WTC11 (cell line): ENCODE measurements at regions of chr15 and their contacts with region 1.

Region 1: GRCh38 chr15:63945007-63945788 is 101.1 kb downstream of the DAPK2 start:
- DNase-seq: peak; percentile 82
- ATAC-seq: peak; percentile 97
- H3K4me3 Mint-ChIP-seq: no peak overlapping the region
- H3K27ac Mint-ChIP-seq: no peak overlapping the region
- H3K4me1 Mint-ChIP-seq: peaks cover 2% of the 10 kb centered on the region
- H3K27me3 Mint-ChIP-seq: no peaks in the 10 kb centered on the region
- CTCF ChIP-seq: peak; percentile 87

Region 2: GRCh38 chr15:63701365-63701764 is 243.8 kb before region 1 on chr15:
- CTCF ChIA-PET with region 1: no interaction called
- POLR2A ChIA-PET with region 1: no interaction called
- DNase-seq: no peak
- ATAC-seq: no peak
- H3K4me3 Mint-ChIP-seq: no peak overlapping the region
- H3K27ac Mint-ChIP-seq: no peak overlapping the region
- H3K4me1 Mint-ChIP-seq: peaks cover 3% of the 10 kb centered on the region; the same call in 1 of the 2 replicates
- H3K27me3 Mint-ChIP-seq: no peaks in the 10 kb centered on the region
- CTCF ChIP-seq: no peak

Region 3: GRCh38 chr15:63752075-63752684 is 193.0 kb before region 1 on chr15:
- CTCF ChIA-PET with region 1: interaction called, 24 read pairs
- POLR2A ChIA-PET with region 1: no interaction called
- DNase-seq: no peak
- ATAC-seq: peak; percentile 55; the same call in 1 of the 2 replicates
- H3K4me3 Mint-ChIP-seq: no peak overlapping the region
- H3K27ac Mint-ChIP-seq: no peak overlapping the region
- H3K4me1 Mint-ChIP-seq: no peaks in the 10 kb centered on the region
- H3K27me3 Mint-ChIP-seq: no peaks in the 10 kb centered on the region
- CTCF ChIP-seq: peak; percentile 36

Region 4: DNA sequence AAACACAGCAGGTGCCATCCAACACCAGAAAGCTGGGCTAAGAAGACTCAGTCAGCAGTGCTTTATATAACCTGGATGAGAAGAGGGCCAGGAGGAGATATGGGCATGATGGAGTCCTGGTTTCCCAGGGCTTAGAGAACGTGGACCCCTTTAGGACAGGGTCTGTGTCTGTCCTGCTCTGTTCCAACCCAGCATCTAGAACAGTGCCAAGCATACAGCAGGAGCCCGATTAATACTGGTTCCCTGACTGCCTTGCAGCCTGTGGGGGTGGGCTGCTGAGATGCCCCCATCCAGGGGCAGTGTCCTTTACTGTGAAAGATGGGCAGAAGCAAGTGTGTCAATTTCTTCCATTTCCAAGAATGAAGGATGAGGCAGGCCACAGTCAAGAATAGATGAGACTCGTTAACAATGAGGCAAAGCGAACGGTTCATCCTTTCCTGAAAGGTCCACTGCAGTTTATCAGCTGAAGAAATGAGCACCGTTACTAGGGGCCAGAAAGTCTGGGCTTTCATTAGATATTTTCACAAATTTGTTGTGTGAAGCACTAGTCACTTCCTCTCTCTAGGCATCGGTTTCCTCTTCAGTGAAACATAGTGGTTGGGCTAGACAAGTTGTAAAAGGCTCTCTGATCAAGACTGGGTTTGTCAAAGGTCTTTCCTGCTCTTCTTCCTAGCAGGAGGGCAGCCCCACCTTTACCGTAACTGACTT is 39.5 kb before region 1 on chr15:
- CTCF ChIA-PET with region 1: interaction called, 28 read pairs
- POLR2A ChIA-PET with region 1: no interaction called
- DNase-seq: no peak
- ATAC-seq: no peak
- H3K4me3 Mint-ChIP-seq: no peak overlapping the region
- H3K27ac Mint-ChIP-seq: no peak overlapping the region
- H3K4me1 Mint-ChIP-seq: peaks cover 20% of the 10 kb centered on the region
- H3K27me3 Mint-ChIP-seq: no peaks in the 10 kb centered on the region
- CTCF ChIP-seq: no peak

Region 5: DNA sequence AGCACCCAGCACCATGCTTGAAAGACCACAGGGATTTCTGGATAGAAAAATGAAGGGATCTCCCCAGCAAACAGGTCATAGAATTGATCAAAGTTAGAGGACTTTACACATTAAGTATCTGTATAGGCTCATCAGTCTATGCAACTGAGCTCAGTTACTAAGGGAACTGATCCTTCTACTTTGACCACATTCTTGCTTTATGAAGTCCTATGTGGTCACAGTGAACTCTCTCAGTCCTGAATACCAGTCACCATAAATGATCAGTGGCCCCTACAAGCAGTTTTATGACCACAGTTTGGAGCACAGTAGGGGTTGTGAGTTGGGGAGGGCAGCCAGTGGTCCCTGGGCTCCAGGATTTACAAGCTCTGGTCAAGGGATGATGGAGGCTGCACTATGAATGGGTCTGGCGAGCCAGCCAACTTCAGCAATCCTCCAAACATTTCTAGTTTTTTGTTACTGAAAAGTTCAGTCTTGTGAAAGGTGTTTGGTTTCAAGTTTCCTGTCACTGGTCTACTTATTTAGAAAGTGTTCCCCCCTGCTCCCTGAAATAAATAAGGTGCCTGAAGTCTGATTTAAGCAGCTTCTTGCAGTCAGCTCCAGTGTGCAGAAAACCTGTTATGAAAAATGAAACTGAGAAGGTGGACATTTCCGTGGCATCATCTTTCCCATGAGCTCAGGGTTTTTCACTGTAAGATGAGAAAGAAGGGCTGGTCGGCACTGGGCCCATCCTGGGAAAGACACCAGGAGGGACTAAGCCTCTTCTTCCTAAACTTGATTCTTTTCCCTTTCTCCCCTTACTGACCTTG is 25.6 kb after region 1 on chr15:
- CTCF ChIA-PET with region 1: interaction called, 52 read pairs
- POLR2A ChIA-PET with region 1: no interaction called
- DNase-seq: no peak
- ATAC-seq: no peak
- H3K4me3 Mint-ChIP-seq: no peak overlapping the region
- H3K27ac Mint-ChIP-seq: no peak overlapping the region
- H3K4me1 Mint-ChIP-seq: peaks cover 55% of the 10 kb centered on the region
- H3K27me3 Mint-ChIP-seq: peaks cover 23% of the 10 kb centered on the region
- CTCF ChIP-seq: no peak

Region 6: DNA sequence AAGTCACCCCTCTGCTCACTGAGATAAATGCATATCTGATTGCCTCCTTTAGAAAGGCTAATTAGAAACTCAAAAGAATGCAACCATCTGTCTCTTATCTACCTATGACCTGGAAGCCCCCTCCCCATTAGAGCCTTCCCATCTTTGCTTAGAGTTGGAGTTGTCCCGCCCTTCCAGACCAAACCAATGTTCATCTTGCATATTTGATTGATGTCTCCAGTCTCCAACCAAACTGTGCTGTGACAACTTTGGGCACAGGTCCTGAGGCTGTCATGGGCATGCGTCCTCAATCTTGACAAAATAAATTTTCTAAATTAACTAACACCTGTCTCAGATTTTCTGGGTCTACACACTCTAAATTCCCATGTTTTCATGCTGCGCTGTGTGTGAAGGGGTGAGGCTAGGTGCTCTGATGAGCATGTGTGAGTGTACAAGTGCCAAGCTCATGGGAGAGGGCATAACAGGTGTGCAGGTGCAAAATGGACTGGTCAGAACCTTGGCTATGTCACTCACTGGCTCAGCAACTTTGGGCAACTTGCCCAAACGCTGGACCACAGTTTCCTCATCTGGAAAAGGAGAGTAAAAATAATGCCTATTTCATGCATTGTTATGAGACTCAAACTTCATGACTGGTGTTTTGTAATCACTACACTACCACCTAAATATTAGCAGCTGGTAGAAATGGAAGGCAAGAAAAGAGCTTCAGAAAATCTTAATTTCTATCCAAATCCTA is 93.8 kb after region 1 on chr15:
- CTCF ChIA-PET with region 1: interaction called, 24 read pairs
- POLR2A ChIA-PET with region 1: no interaction called
- DNase-seq: no peak
- ATAC-seq: peak; percentile 87
- H3K4me3 Mint-ChIP-seq: no peak overlapping the region
- H3K27ac Mint-ChIP-seq: no peak overlapping the region
- H3K4me1 Mint-ChIP-seq: peaks cover 10% of the 10 kb centered on the region
- H3K27me3 Mint-ChIP-seq: peaks cover 19% of the 10 kb centered on the region
- CTCF ChIP-seq: no peak

Region 7: GRCh38 chr15:64067564-64068030 is 122.4 kb after region 1 on chr15:
- CTCF ChIA-PET with region 1: interaction called, 31 read pairs
- POLR2A ChIA-PET with region 1: no interaction called
- DNase-seq: peak; percentile 84
- ATAC-seq: peak; percentile 91
- H3K4me3 Mint-ChIP-seq: peak overlapping the region; percentile 27; the same call in 1 of the 2 replicates
- H3K27ac Mint-ChIP-seq: no peak overlapping the region
- H3K4me1 Mint-ChIP-seq: 0 out of 2 replicates have a peak, but pooled peaks cover 4% of the 10 kb centered on the region
- H3K27me3 Mint-ChIP-seq: no peaks in the 10 kb centered on the region; the same call in 1 of the 2 replicates
- CTCF ChIP-seq: peak; percentile 64